Heart left ventricle (tissue), 16 donors: ENCODE measurements at regions of chr9 and their contacts with region 1.

Region 1: GRCh38 chr9:107489687-107490605 is at the start of gene KLF4:
- DNase-seq: peak; percentile 92 to 94 (median 93)
- ATAC-seq: peak; percentile 71 to 91 (median 83)
- H3K4me3 ChIP-seq: peak within 1 kb of the TSS; percentile 64 to 92 (median 81)
- H3K27ac ChIP-seq: peak within 1 kb of the TSS; percentile 90 to 99 (median 95)
- H3K4me1 ChIP-seq: peaks cover 0 to 47% (median 15%) of the 10 kb centered on the region in 12 donors
- H3K27me3 ChIP-seq: peaks cover 0 to 16% (median 0%) of the 10 kb centered on the region in 9 donors
- CTCF ChIP-seq: peak in 1 of 12 donors; percentile 3
- POLR2A ChIP-seq: peak in 1 of 2 donors; percentile 92
- total RNA-seq, gene KLF4: 17.1 to 63.3 (median 21.3) TPM

Region 2: DNA sequence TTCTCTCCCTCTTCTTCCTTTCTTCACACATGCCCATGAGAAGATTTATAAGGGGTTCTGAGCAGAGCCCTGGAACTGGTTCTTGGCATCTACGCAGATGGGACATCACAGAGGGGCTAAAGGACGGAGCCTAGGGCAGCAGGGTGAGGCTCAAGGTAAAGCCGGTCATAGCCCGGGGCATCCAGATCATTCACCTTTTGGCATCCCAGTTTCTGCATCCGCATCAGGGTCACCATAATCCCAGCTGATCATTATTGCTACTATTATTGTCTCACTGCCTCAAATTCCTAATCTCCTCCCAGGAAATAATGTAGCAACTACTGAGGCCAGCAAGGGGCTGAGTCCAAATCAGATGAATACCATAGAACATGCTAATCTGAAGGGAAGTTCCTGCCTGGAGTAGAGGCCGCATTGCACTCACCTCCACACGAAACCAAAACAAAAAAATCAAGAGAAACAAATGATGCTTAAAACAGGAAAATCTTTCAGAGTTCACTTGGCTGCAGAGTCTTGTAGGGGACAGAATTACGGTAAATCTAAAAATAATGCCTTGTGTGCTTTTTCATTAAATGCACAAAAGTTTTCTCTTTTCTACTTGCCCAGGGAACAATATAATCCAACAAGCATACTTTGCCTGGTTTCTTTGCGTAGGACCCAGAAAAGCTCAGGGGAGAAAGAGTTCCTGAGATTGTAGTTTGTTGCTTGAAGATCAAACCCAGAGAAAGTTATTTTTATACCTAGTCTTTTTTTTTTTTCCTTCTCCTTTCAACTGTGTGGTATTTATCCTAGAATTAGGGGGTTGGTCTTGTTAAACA is 87.2 kb after region 1 on chr9:
- intact Hi-C with region 1: loop called in 3 of 10 experiments (anchors 2 to 10 kb)
- DNase-seq: peak in 1 of 5 donors; percentile 12
- ATAC-seq: peak; percentile 68 to 94 (median 82)
- H3K4me3 ChIP-seq: no peak overlapping the region
- H3K27ac ChIP-seq: peak overlapping the region; percentile 22 to 83 (median 53)
- H3K4me1 ChIP-seq: peaks cover 0 to 15% (median 5%) of the 10 kb centered on the region in 12 donors
- H3K27me3 ChIP-seq: no peaks in the 10 kb centered on the region
- CTCF ChIP-seq: no peak
- POLR2A ChIP-seq: no peak

Region 3: DNA sequence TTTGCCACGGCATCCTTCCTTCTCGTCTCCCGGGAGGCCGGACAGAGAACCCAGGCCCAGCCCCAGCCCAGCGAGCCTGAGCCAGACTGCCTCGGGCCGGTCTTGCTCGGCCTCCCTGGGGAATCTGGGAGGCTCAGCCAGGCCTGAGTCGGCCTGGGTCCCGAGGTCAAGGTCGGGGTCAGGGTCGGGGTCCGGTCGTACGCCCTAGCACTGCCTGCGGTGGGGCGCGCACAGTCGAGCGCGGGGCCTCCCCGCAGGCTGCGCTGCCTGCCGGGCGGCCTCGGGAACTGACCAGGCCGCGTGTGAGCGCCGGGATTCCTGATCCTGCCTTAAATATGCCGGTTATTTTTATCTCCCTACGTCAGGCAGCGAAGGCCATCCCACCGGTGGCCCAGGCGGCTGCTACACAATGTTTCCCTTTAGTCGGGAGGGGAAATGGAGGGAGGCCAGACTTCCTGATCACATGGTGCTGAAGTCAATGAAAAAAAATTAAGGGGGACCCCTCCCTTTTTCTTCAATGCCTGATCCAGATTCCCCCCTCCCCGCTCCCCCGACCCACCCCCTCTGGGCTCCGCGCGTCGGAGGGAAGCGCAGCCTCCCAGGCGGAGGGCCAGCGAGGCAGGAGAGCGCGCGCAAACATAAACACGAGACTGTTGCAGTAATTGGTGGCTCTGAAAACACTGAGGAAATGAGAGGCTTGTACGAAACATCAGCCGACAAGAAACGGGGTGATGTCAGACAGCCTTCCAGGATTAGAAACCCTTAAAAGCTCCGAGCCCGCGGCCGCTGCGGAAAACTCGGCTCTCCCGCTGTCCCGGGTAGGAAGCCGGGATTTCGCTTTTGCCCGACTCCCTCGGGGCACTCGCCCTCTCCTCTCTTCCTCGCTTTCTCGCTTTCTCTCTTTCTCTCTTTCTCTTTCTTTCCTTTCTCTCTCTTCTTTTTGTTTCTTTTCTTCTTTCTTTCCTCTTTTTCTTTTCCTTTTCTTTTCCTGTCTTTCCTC is 147.8 kb after region 1 on chr9:
- intact Hi-C with region 1: loop called (anchors 1 to 10 kb)
- DNase-seq: peak; percentile 92 to 95 (median 95)
- ATAC-seq: peak; percentile 90 to 96 (median 94)
- H3K4me3 ChIP-seq: peak overlapping the region in 11 of 12 donors; percentile 26 to 61 (median 51)
- H3K27ac ChIP-seq: peak overlapping the region; percentile 95 to 100 (median 96)
- H3K4me1 ChIP-seq: peaks cover 0 to 32% (median 14%) of the 10 kb centered on the region in 12 donors
- H3K27me3 ChIP-seq: no peaks in the 10 kb centered on the region
- CTCF ChIP-seq: peak in 7 of 12 donors; percentile 9 to 56 (median 39)
- POLR2A ChIP-seq: peak; percentile 79 to 99

Region 4: DNA sequence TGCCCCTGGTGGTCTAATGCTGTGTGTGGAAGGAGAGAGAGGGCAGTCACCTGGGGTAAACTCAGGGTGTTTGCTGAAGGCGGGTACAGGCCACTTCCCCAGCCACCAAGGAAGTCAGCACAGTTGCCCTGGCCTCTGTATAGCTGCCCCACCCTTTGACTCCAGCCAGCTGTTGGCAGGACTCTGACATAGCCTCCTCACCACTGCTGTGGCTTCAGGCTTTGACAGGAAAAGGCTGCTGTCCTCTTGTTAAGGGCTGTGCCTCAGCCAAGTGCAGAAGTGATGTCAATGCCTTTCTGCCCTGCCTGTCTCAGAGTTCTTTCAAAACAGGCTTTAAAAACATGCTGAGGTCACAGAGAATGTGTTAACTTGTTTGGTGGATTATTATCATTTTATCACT is 486.8 kb after region 1 on chr9:
- intact Hi-C with region 1: loop called in 1 of 10 experiments (anchors 10 kb)
- DNase-seq: peak; percentile 18 to 82 (median 71)
- ATAC-seq: peak; percentile 77 to 98 (median 94)
- H3K4me3 ChIP-seq: no peak overlapping the region
- H3K27ac ChIP-seq: peak overlapping the region in 1 of 12 donors; percentile 13
- H3K4me1 ChIP-seq: peaks cover 0 to 17% (median 0%) of the 10 kb centered on the region in 12 donors
- H3K27me3 ChIP-seq: no peaks in the 10 kb centered on the region
- CTCF ChIP-seq: no peak
- POLR2A ChIP-seq: no peak

Region 5: GRCh38 chr9:108272349-108272899 is 782.5 kb after region 1 on chr9:
- intact Hi-C with region 1: loop called in 7 of 10 experiments (anchors 2 to 10 kb)
- DNase-seq: peak; percentile 31 to 65 (median 53)
- ATAC-seq: peak; percentile 75 to 91 (median 84)
- H3K4me3 ChIP-seq: peak overlapping the region in 6 of 12 donors; percentile 6 to 42 (median 36)
- H3K27ac ChIP-seq: peak overlapping the region in 7 of 12 donors; percentile 23 to 72 (median 40)
- H3K4me1 ChIP-seq: peaks cover 0 to 20% (median 0%) of the 10 kb centered on the region in 12 donors
- H3K27me3 ChIP-seq: no peaks in the 10 kb centered on the region
- CTCF ChIP-seq: peak in 11 of 12 donors; percentile 55 to 75 (median 65)
- POLR2A ChIP-seq: no peak